GM12878 (cell line): ENCODE measurements at regions of chr7 and their contacts with region 1.

Region 1: DNA sequence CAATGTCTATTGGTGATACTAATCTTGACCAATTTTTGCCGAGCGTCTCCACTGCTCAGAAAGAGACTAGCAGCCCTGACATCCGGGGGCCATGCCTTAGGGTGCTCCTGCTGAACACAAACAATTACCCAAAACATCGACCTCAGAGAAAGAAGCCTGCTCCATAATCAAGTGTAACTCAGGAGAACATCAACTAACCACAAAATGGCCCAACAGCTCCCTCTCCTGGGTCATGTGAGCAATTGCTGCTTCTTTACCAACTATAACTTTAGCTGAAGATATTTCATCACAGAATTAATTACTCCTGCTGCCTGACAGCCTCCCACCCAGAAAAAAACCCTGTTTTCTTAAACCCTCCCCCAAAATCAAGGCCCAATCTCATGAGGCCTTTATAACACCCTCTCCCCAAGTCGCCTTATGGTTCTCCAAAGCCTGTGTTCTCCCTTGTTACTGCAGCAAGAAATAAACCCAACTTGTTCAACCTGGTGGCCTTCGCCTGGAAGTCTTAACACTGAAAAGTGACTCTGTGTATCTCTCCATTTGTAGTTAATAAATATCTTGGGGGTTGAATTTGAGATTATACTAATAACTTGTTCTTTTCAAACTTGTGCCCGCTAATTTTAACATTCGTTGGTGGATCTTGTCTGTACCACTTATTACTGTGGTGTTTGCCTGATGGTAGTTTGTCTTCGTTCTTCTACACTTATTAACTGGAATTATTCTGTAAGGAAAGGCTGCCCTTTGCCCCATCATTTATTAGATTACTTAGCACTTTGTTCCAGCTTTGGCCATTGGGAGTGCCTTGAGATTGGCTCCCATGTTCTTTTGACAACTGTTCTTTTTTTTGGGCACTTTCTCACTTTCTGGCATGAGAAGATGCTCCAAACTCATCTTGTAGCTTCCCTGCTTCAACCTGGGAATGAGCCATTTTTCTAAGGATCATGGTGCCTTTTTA is 21.2 kb upstream of the RAMP3 start:
- DNase-seq: peak; percentile 41
- ATAC-seq: peak; percentile 86
- H3K4me3 ChIP-seq: no peak overlapping the region
- H3K27ac ChIP-seq: no peak overlapping the region
- H3K4me1 ChIP-seq: peaks cover 4% of the 10 kb centered on the region; the same call in 1 of the 2 replicates
- H3K27me3 ChIP-seq: no peaks in the 10 kb centered on the region
- CTCF ChIP-seq: peak; percentile 81 to 94 (median 84)
- EP300 ChIP-seq: no peak
- POLR2A ChIP-seq: no peak
- RAD21 ChIP-seq: peak; percentile 97

Region 2: DNA sequence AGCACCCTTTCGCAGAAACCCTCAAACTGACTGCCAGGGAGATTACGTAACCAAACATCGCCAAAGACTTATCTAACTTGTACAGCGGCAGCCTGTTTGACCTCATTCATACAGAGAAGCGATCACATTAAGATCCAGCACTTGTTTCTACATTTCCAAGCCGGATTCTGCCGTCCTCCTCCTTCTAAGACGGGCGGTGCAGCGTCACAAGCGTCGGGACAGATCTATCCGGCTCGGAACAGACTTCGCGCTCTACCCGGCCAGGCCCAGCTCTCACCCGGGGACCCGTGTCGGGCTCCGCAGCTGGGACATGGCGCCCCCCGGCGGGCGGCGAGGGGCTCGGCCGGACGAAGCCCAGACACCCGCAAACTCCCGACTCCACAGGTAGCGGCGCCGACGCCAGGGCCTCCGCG is 288.9 kb before region 1 on chr7:
- CTCF ChIA-PET with region 1: interaction called, 145 read pairs
- POLR2A ChIA-PET with region 1: no interaction called
- RAD21 ChIA-PET with region 1: interaction called, 11 read pairs
- SMC1A ChIA-PET with region 1: interaction called, 24 read pairs
- in situ Hi-C with region 1: no loop called
- intact Hi-C with region 1: no loop called
- DNase-seq: peak; percentile 51
- ATAC-seq: peak; percentile 75
- H3K4me3 ChIP-seq: peak overlapping the region; percentile 75
- H3K27ac ChIP-seq: peak overlapping the region; percentile 87
- H3K4me1 ChIP-seq: peaks cover 8% of the 10 kb centered on the region; the same call in 1 of the 2 replicates
- H3K27me3 ChIP-seq: no peaks in the 10 kb centered on the region
- CTCF ChIP-seq: peak; percentile 82 to 95 (median 88)
- EP300 ChIP-seq: no peak
- POLR2A ChIP-seq: no peak
- RAD21 ChIP-seq: peak; percentile 79

Region 3: DNA sequence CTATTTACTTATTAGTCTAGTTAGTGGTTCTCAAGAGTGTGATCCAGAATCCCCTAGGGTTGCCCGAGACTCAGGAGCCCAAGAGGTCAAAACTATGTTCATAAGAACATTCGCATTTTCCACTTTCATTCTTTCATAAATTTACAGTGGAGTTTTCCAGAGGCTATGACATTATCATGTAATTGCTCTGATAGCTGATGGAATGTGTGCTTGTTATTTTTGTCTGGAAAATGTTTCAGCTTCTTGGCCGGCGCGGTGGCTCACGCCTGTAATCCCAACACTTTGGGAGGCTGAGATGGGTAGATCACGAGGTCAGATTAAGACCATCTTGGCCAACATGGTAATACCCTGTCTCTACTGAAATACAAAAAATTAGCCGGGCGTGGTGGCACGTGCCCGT is 261.1 kb before region 1 on chr7:
- CTCF ChIA-PET with region 1: interaction called, 14 read pairs
- POLR2A ChIA-PET with region 1: no interaction called
- RAD21 ChIA-PET with region 1: interaction called, 10 read pairs
- SMC1A ChIA-PET with region 1: interaction called, 5 read pairs
- in situ Hi-C with region 1: no loop called
- intact Hi-C with region 1: no loop called
- DNase-seq: no peak
- ATAC-seq: no peak
- H3K4me3 ChIP-seq: no peak overlapping the region
- H3K27ac ChIP-seq: no peak overlapping the region
- H3K4me1 ChIP-seq: no peaks in the 10 kb centered on the region
- H3K27me3 ChIP-seq: no peaks in the 10 kb centered on the region
- CTCF ChIP-seq: no peak
- EP300 ChIP-seq: no peak
- POLR2A ChIP-seq: no peak
- RAD21 ChIP-seq: no peak

Region 4: GRCh38 chr7:44936322-44936721 is 200.1 kb before region 1 on chr7:
- CTCF ChIA-PET with region 1: interaction called, 16 read pairs
- POLR2A ChIA-PET with region 1: no interaction called
- RAD21 ChIA-PET with region 1: interaction called, 3 read pairs
- SMC1A ChIA-PET with region 1: no interaction called
- in situ Hi-C with region 1: no loop called
- intact Hi-C with region 1: no loop called
- DNase-seq: no peak
- ATAC-seq: peak; percentile 90
- H3K4me3 ChIP-seq: no peak overlapping the region
- H3K27ac ChIP-seq: no peak overlapping the region
- H3K4me1 ChIP-seq: no peaks in the 10 kb centered on the region
- H3K27me3 ChIP-seq: no peaks in the 10 kb centered on the region
- CTCF ChIP-seq: no peak
- EP300 ChIP-seq: no peak
- POLR2A ChIP-seq: no peak
- RAD21 ChIP-seq: no peak

Region 5: GRCh38 chr7:44999245-45000095 is 136.9 kb before region 1 on chr7:
- CTCF ChIA-PET with region 1: interaction called, 15 read pairs
- POLR2A ChIA-PET with region 1: interaction called, 3 read pairs
- RAD21 ChIA-PET with region 1: interaction called, 7 read pairs
- SMC1A ChIA-PET with region 1: interaction called, 10 read pairs
- in situ Hi-C with region 1: no loop called
- intact Hi-C with region 1: no loop called
- DNase-seq: peak; percentile 96
- ATAC-seq: peak; percentile 88
- H3K4me3 ChIP-seq: peak overlapping the region; percentile 95
- H3K27ac ChIP-seq: peak overlapping the region; percentile 79
- H3K4me1 ChIP-seq: peaks cover 43% of the 10 kb centered on the region
- H3K27me3 ChIP-seq: no peaks in the 10 kb centered on the region
- CTCF ChIP-seq: no peak
- EP300 ChIP-seq: no peak
- POLR2A ChIP-seq: no peak; the same call in none of the 2 replicates
- RAD21 ChIP-seq: no peak

Region 6: DNA sequence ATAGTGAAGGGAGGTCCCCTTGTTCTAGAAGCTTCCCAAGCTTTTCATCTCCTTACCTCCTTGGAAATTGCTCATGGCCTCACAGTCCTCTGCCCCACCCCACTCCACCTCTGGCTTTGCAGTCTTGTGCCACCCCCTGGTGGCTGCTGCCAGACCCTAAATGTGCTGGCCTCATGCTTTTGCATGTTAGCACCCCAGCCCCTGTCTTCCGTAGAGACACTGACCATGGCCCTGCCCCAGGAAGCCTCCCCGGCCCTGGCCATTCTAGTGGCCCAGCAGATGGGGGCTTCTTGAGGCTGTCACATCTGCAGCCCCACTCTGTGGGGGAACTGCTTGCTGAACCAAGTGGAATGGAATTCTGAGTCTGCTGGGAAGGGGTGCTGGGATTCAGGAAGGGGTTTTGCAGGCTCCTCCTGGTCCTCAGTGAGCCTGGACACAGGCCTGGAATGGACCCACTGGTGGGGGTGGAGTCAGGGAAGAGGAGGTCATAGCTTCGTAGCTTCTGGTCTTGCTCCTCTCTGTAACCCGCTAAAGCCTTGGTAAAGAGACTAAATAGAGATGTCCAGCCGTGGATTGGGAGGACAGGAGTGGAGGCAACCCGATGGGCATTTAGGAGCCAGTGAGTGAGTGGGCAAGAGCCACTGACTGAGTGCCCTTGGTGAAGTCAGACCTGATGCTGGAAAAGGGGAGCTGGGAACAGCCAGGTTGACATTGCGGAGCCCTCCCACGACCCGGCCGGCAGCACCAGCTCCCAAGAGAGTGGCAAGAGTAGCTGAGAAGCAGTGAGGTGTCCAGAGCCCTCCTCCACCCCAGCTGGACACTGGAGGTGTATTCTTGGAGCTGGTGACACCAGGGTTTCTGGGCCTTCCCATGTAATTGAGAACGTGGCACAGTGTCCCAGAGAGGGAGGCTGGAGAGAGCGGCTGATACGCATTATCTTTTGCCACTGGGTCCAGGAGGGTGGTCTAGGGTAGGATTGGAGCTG is 42.1 kb after region 1 on chr7:
- CTCF ChIA-PET with region 1: no interaction called
- POLR2A ChIA-PET with region 1: no interaction called
- RAD21 ChIA-PET with region 1: no interaction called
- SMC1A ChIA-PET with region 1: no interaction called
- in situ Hi-C with region 1: no loop called
- intact Hi-C with region 1: no loop called
- DNase-seq: no peak
- ATAC-seq: peak; percentile 73
- H3K4me3 ChIP-seq: no peak overlapping the region
- H3K27ac ChIP-seq: no peak overlapping the region
- H3K4me1 ChIP-seq: no peaks in the 10 kb centered on the region
- H3K27me3 ChIP-seq: peaks cover 0 to 2% of the 10 kb centered on the region in 2 experiments; a peak in 2 of 4 replicates
- CTCF ChIP-seq: peak; percentile 21 to 37 (median 34); a peak in 4 of 6 replicates
- EP300 ChIP-seq: no peak
- POLR2A ChIP-seq: no peak
- RAD21 ChIP-seq: peak; percentile 43